ENCODE measurements at regions of chr1 and their contacts with region 1.

Region 1: GRCh38 chr1:183023601-183024316 is 539 bp downstream of the LAMC1 start:
- DNase-seq: peak; percentile 81 to 87
- H3K4me3 ChIP-seq: peak overlapping the region; percentile 82
- H3K27ac ChIP-seq: peak overlapping the region; percentile 77
- H3K4me1 ChIP-seq: peaks cover 61% of the 10 kb centered on the region
- H3K27me3 ChIP-seq: no peaks in the 10 kb centered on the region
- CTCF ChIP-seq: peak; percentile 65

Region 2: DNA sequence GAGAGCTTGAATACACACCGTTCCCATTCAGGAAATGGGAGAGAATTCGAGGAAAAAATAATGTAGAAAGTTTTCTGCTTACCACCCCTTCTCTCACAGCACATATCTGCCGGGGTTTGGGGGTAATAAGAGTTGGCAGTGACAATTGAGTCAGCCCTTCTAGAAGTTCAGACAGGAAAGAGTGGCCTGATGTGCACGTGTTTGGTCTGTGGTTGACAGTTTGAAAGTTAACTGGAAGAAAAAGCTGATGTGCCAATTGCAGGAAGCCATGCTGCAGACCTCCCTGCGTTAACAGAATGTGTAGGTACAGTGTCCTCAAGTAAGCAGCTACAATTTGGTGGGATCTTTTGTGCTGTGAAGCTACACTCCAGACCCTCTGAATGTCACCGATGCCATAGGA is 133.8 kb before region 1 on chr1:
- CTCF ChIA-PET with region 1: no interaction called
- POLR2A ChIA-PET with region 1: no interaction called
- intact Hi-C with region 1: loop called (anchors 10 kb)
- DNase-seq: no peak
- H3K4me3 ChIP-seq: no peak overlapping the region
- H3K27ac ChIP-seq: no peak overlapping the region
- H3K4me1 ChIP-seq: peaks cover 13% of the 10 kb centered on the region
- H3K27me3 ChIP-seq: no peaks in the 10 kb centered on the region
- CTCF ChIP-seq: no peak

Region 3: DNA sequence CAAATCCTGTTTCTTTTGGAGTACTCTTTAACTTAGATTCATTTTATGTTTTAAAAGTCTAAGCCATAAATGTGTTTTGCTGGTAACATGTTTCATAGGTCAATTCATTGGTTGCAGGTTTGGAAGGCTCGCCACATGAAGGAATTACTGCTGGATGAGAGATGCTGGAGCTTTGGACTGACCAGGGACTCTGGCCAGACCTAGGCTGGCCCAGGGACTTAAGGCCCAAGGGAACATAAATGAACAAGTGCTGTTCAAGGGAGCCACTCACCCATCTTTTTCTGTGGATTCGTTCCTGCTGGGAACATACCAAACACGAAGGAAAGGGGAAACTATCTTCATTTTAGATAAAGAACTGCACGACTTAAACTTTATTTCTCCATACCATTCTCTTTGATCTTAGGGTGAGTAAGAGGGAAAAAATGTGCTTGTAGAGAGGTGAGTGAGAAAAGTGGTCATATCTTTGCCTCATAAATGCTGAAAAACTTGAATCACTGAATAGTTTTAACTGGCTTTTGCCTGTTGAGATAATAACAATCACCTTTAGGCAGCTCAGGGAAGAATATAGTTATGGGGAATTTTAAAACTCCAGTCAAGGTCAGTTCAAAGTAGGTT is 55.5 kb before region 1 on chr1:
- CTCF ChIA-PET with region 1: no interaction called
- POLR2A ChIA-PET with region 1: no interaction called
- intact Hi-C with region 1: loop called (anchors 1 kb)
- DNase-seq: peak; percentile 37 to 88
- H3K4me3 ChIP-seq: peak overlapping the region; percentile 13; the same call in 1 of the 2 replicates
- H3K27ac ChIP-seq: peak overlapping the region; percentile 76
- H3K4me1 ChIP-seq: peaks cover 36% of the 10 kb centered on the region
- H3K27me3 ChIP-seq: no peaks in the 10 kb centered on the region
- CTCF ChIP-seq: no peak

Region 4: GRCh38 chr1:183090391-183091006 is 66.7 kb after region 1 on chr1:
- CTCF ChIA-PET with region 1: no interaction called
- POLR2A ChIA-PET with region 1: interaction called, 4 read pairs
- intact Hi-C with region 1: loop called (anchors 2 kb)
- DNase-seq: no peak
- H3K4me3 ChIP-seq: no peak overlapping the region
- H3K27ac ChIP-seq: no peak overlapping the region
- H3K4me1 ChIP-seq: peaks cover 58% of the 10 kb centered on the region
- H3K27me3 ChIP-seq: no peaks in the 10 kb centered on the region
- CTCF ChIP-seq: no peak

Region 5: DNA sequence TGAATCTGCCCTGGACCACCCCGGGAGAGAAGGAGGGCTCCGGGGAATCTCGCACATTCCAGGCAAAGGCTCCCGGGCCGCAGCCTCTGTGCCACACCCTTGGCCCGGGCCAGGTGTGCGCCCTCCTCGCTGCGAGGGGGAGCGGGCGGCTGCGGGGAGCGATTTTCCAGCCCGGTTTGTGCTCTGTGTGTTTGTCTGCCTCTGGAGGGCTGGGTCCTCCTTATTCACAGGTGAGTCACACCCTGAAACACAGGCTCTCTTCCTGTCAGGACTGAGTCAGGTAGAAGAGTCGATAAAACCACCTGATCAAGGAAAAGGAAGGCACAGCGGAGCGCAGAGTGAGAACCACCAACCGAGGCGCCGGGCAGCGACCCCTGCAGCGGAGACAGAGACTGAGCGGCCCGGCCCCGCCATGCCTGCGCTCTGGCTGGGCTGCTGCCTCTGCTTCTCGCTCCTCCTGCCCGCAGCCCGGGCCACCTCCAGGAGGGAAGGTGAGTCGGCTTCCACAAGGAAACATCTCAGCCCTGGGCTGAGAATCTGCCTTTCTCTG is 162.3 kb after region 1 on chr1 and contains the start of gene LAMC2:
- CTCF ChIA-PET with region 1: interaction called, 3 read pairs
- POLR2A ChIA-PET with region 1: no interaction called
- intact Hi-C with region 1: loop called (anchors 2 kb)
- DNase-seq: peak; percentile 89 to 98
- H3K4me3 ChIP-seq: peak within 1 kb of the TSS; percentile 75
- H3K27ac ChIP-seq: peak within 1 kb of the TSS; percentile 85
- H3K4me1 ChIP-seq: peaks cover 42% of the 10 kb centered on the region
- H3K27me3 ChIP-seq: no peaks in the 10 kb centered on the region
- CTCF ChIP-seq: peak; percentile 63
- total RNA-seq, gene LAMC2: 105 and 109 TPM in 2 replicates

Region 6: GRCh38 chr1:183281553-183282091 is 257.9 kb after region 1 on chr1:
- CTCF ChIA-PET with region 1: no interaction called
- POLR2A ChIA-PET with region 1: no interaction called
- intact Hi-C with region 1: loop called (anchors 1 kb)
- DNase-seq: peak; percentile 77 to 91
- H3K4me3 ChIP-seq: no peak overlapping the region
- H3K27ac ChIP-seq: peak overlapping the region; percentile 45; the same call in 1 of the 2 replicates
- H3K4me1 ChIP-seq: peaks cover 54% of the 10 kb centered on the region
- H3K27me3 ChIP-seq: no peaks in the 10 kb centered on the region
- CTCF ChIP-seq: peak; percentile 96

Measured in PC-9 (cell line).